A549 (cell line): ENCODE measurements at regions of chr20 and their contacts with region 1.

Region 1: GRCh38 chr20:57772276-57773030 is 62.6 kb upstream of the PMEPA1 start:
- DNase-seq: peak; percentile 94 to 98
- ATAC-seq: peak; percentile 94 to 98
- H3K4me3 ChIP-seq: peak overlapping the region; percentile 30; the same call in 1 of the 3 replicates
- H3K27ac ChIP-seq: peak overlapping the region; percentile 95 to 96
- H3K4me1 ChIP-seq: peaks cover 54% of the 10 kb centered on the region
- CTCF ChIP-seq: no peak
- EP300 ChIP-seq: peak; percentile 98 to 99
- POLR2A ChIP-seq: no peak
- RAD21 ChIP-seq: peak; percentile 61 to 83

Region 2: GRCh38 chr20:57698117-57698866 is 74.2 kb before region 1 on chr20:
- CTCF ChIA-PET with region 1: interaction called, 8 read pairs
- POLR2A ChIA-PET with region 1: interaction called, 19 read pairs
- DNase-seq: peak; percentile 95 to 99
- ATAC-seq: peak; percentile 77 to 83
- H3K4me3 ChIP-seq: peak overlapping the region; percentile 29
- H3K27ac ChIP-seq: peak overlapping the region; percentile 92 to 97
- H3K4me1 ChIP-seq: peaks cover 95% of the 10 kb centered on the region
- CTCF ChIP-seq: no peak
- EP300 ChIP-seq: peak; percentile 94 to 95; a peak in 4 of 5 replicates
- POLR2A ChIP-seq: no peak
- RAD21 ChIP-seq: peak in 1 of 2 experiments; percentile 44; a peak in 1 of 5 replicates

Region 3: GRCh38 chr20:57718490-57719271 is 53.8 kb before region 1 on chr20:
- CTCF ChIA-PET with region 1: interaction called, 3 read pairs
- POLR2A ChIA-PET with region 1: interaction called, 18 read pairs
- DNase-seq: peak; percentile 98 to 99
- ATAC-seq: peak; percentile 89 to 92
- H3K4me3 ChIP-seq: peak overlapping the region; percentile 57
- H3K27ac ChIP-seq: peak overlapping the region; percentile 97 to 98
- H3K4me1 ChIP-seq: peaks cover 54% of the 10 kb centered on the region
- CTCF ChIP-seq: no peak
- EP300 ChIP-seq: no peak
- POLR2A ChIP-seq: peak; percentile 47; the same call in 1 of the 2 replicates
- RAD21 ChIP-seq: peak; percentile 8 to 32; a peak in 1 of 5 replicates

Region 4: DNA sequence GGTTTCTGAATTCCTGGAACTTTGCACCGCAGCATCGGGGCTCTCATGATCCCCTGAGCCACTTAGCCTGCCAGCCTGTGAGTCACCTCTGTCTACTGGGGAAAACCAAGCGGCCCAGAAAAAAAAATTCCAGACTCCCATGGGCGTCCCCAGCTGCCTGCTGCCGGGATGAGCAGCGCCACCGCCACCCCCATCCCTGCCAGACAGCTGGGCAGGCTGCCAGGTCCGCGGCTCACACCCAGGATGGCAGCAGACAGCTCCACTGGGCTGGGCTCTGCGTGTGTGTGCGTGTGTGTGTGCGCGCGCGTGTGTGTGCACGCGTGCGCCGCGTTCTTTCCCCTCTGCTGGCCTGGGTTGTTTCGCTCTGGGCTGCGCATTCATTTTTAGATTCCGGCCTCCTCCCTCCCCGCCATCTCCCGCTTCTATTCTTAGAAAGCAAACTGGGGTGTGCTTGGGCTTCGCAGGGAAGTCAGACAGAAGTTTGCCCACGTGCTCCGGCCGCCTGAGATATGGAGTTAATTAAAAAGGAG is 23.8 kb before region 1 on chr20:
- CTCF ChIA-PET with region 1: interaction called, 4 read pairs
- POLR2A ChIA-PET with region 1: interaction called, 37 read pairs
- DNase-seq: peak; percentile 96 to 97
- ATAC-seq: peak; percentile 94
- H3K4me3 ChIP-seq: peak overlapping the region; percentile 24
- H3K27ac ChIP-seq: peak overlapping the region; percentile 98
- H3K4me1 ChIP-seq: peaks cover 54% of the 10 kb centered on the region
- CTCF ChIP-seq: 0 out of 3 replicates have a peak, but pooled peaks have one; percentile 7
- EP300 ChIP-seq: peak; percentile 85 to 92
- POLR2A ChIP-seq: no peak
- RAD21 ChIP-seq: peak; percentile 33 to 67; a peak in 4 of 5 replicates

Region 5: DNA sequence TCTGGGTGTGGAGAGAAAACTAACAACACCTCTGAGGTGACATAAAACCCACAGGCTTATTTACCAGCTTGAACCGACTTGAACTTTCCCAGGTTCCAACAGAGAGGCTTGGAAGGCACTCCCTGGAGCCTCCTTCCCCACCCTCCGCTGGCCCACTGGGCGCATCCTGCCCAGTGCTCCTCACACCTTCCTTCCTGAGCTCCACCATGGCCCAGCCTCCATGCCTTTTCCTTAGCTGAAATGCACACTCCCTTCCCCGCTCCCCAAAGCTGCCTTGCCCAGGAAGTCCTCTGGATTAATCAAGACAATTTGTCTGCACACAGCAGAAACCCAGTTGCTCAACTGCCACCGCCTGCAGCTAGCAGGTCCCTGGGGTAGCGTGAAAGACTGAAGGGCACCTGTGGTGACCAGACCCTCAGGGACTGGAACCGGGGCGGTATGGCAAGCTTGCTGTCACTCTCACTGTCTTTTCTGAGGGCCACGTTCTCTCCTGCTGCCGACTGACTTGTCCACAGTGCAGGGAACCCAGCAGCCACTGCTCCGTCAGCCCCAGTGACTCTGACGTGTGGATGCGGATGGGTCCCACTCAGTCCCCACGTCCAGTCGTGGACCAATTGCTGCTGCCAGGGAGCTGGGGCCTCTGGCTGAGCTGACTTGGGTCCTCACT is 10.1 kb after region 1 on chr20:
- CTCF ChIA-PET with region 1: interaction called, 11 read pairs
- POLR2A ChIA-PET with region 1: interaction called, 3 read pairs
- DNase-seq: no peak
- ATAC-seq: no peak
- H3K4me3 ChIP-seq: no peak overlapping the region
- H3K27ac ChIP-seq: peak overlapping the region; percentile 8 to 66; a peak in 4 of 6 replicates
- H3K4me1 ChIP-seq: peaks cover 39% of the 10 kb centered on the region
- CTCF ChIP-seq: no peak
- EP300 ChIP-seq: no peak
- POLR2A ChIP-seq: 0 out of 2 replicates have a peak, but pooled peaks have one; percentile 9
- RAD21 ChIP-seq: no peak

Region 6: GRCh38 chr20:58087193-58087858 is 314.9 kb after region 1 on chr20:
- CTCF ChIA-PET with region 1: interaction called, 14 read pairs
- POLR2A ChIA-PET with region 1: interaction called, 4 read pairs
- DNase-seq: peak; percentile 56 to 57
- ATAC-seq: peak in 1 of 2 experiments; percentile 76; a peak in 3 of 6 replicates
- H3K4me3 ChIP-seq: no peak overlapping the region
- H3K27ac ChIP-seq: peak overlapping the region; percentile 42 to 70
- H3K4me1 ChIP-seq: peaks cover 4% of the 10 kb centered on the region
- CTCF ChIP-seq: peak; percentile 76
- EP300 ChIP-seq: no peak
- POLR2A ChIP-seq: no peak
- RAD21 ChIP-seq: peak; percentile 83 to 89